HEK293T (cell line): ENCODE measurements at regions of chr15 and their contacts with region 1.

Region 1: DNA sequence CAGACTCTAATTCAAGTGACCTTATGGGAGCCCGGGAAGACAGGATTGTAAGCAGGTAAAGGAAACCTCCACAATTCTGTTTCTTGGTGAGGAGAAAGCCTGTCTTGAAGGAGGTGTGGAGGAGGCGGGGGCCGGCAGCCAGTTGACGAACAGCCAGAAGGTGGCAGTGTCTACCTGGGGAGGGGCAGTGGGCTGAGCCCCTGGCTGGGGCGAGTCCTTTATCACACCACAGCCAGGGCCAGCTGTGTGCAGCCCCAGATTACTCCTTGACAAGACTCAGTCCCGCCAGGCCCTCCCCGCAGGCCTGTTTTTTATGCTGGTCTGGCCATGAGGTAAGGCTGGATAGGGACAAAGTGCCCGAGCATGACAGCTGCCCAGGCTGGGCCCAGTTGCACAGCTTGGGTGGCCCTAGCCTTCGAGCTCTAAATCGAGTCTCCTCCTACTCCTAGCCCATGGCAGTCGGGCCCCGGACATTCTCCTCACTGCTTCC is 40.9 kb upstream of the IDH2 start:
- DNase-seq: peak; percentile 91

Region 2: GRCh38 chr15:90114451-90114901 is 28.7 kb before region 1 on chr15:
- CTCF ChIA-PET with region 1: no interaction called
- POLR2A ChIA-PET with region 1: no interaction called
- DNase-seq: no peak

Region 3: GRCh38 chr15:90174140-90174875 is 31.1 kb after region 1 on chr15:
- CTCF ChIA-PET with region 1: no interaction called
- POLR2A ChIA-PET with region 1: no interaction called
- DNase-seq: no peak

Region 4: DNA sequence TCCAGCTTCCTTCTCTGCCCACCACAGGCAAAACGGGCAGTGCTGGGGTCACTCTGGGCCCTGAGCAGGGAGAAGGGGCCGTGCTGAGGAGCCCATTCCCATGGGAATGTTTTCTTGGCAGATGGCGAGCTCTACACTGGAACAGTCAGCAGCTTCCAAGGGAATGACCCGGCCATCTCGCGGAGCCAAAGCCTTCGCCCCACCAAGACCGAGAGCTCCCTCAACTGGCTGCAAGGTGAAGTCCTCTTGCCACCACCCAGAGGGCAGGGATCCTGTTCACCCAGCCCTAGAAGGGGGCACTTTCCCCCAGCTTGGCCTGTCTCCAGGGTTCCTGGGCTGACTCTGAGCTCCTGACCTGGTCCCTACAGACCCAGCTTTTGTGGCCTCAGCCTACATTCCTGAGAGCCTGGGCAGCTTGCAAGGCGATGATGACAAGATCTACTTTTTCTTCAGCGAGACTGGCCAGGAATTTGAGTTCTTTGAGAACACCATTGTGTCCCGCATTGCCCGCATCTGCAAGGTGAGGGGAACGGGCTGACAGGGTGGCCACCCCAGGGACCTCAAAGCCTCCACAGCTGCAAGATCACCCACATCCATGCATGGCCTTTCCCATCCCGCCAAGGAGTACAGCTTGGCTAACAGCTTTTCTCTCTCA is 78.2 kb after region 1 on chr15:
- CTCF ChIA-PET with region 1: interaction called, 30 read pairs
- POLR2A ChIA-PET with region 1: no interaction called
- DNase-seq: peak; percentile 87